CD8-positive, alpha-beta T cell (primary cell): ENCODE measurements at regions of chr10 and their contacts with region 1.

Region 1: GRCh38 chr10:63866075-63866746 is 345.0 kb downstream of the REEP3 start:
- DNase-seq: peak in 7 of 9 experiments; percentile 7 to 49 (median 22)
- ATAC-seq: peak; percentile 81
- H3K4me3 ChIP-seq: no peak overlapping the region
- H3K4me3 Mint-ChIP-seq: no peak overlapping the region
- H3K27ac ChIP-seq: no peak overlapping the region
- H3K27ac Mint-ChIP-seq: no peak overlapping the region
- H3K4me1 ChIP-seq: peaks cover 8% of the 10 kb centered on the region
- H3K4me1 Mint-ChIP-seq: peaks cover 10% of the 10 kb centered on the region
- H3K27me3 ChIP-seq: peaks cover 0 to 3% of the 10 kb centered on the region in 2 experiments
- H3K27me3 Mint-ChIP-seq: peaks cover 34% of the 10 kb centered on the region
- CTCF ChIP-seq: peak; percentile 73

Region 2: GRCh38 chr10:63878428-63878827 is 12.2 kb after region 1 on chr10:
- CTCF ChIA-PET with region 1: interaction called, 12 read pairs
- POLR2A ChIA-PET with region 1: no interaction called
- intact Hi-C with region 1: no loop called
- DNase-seq: no peak
- ATAC-seq: no peak
- H3K4me3 ChIP-seq: no peak overlapping the region
- H3K4me3 Mint-ChIP-seq: no peak overlapping the region
- H3K27ac ChIP-seq: no peak overlapping the region
- H3K27ac Mint-ChIP-seq: no peak overlapping the region
- H3K4me1 ChIP-seq: no peaks in the 10 kb centered on the region
- H3K4me1 Mint-ChIP-seq: no peaks in the 10 kb centered on the region
- H3K27me3 ChIP-seq: no peaks in the 10 kb centered on the region
- H3K27me3 Mint-ChIP-seq: peaks cover 5% of the 10 kb centered on the region
- CTCF ChIP-seq: no peak

Region 3: GRCh38 chr10:63887023-63887589 is 20.9 kb after region 1 on chr10:
- CTCF ChIA-PET with region 1: interaction called, 10 read pairs
- POLR2A ChIA-PET with region 1: no interaction called
- intact Hi-C with region 1: no loop called
- DNase-seq: no peak
- ATAC-seq: no peak
- H3K4me3 ChIP-seq: no peak overlapping the region
- H3K4me3 Mint-ChIP-seq: no peak overlapping the region
- H3K27ac ChIP-seq: no peak overlapping the region
- H3K27ac Mint-ChIP-seq: no peak overlapping the region
- H3K4me1 ChIP-seq: no peaks in the 10 kb centered on the region
- H3K4me1 Mint-ChIP-seq: no peaks in the 10 kb centered on the region
- H3K27me3 ChIP-seq: no peaks in the 10 kb centered on the region
- H3K27me3 Mint-ChIP-seq: peaks cover 6% of the 10 kb centered on the region
- CTCF ChIP-seq: no peak